ENCODE measurements at regions of chr16 and their contacts with region 1.

Region 1: DNA sequence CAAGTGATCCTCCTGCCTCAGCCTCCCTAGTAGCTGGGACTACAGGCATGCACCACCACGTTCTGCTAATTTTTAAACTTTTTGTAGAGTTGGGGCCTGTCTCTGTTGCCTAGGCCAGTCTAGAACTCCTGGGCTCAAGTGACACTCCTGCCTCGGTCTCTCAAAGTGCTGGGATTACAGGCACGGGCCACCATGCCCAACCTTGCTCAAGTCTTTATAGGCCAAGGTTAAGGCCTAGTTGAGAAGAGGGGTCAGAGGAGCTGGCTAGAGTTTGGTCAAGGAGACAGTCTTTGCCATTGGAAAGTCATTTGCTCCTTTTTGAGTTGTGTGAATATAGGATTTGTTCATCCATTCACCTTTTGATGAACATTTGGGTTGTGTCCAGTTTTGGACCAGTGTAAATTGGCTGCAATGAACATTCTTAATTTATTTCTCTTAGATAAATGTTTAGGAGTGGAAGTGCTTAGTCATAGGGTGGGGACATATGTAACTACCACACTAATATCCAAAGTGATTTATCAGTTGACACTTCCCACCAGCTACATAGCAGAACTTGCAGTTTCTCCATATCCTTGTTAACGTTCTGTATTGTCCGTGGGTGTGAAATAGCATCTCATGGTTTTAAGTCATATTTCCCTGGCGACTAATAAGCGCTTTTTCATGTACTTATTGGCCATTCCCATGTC is 30.7 kb upstream of the ARHGAP17 start:
- DNase-seq: peak; percentile 9
- ATAC-seq: no peak
- H3K4me3 ChIP-seq: no peak overlapping the region
- H3K27ac ChIP-seq: no peak overlapping the region
- H3K4me1 ChIP-seq: peaks cover 24% of the 10 kb centered on the region
- H3K27me3 ChIP-seq: no peaks in the 10 kb centered on the region
- CTCF ChIP-seq: no peak

Region 2: DNA sequence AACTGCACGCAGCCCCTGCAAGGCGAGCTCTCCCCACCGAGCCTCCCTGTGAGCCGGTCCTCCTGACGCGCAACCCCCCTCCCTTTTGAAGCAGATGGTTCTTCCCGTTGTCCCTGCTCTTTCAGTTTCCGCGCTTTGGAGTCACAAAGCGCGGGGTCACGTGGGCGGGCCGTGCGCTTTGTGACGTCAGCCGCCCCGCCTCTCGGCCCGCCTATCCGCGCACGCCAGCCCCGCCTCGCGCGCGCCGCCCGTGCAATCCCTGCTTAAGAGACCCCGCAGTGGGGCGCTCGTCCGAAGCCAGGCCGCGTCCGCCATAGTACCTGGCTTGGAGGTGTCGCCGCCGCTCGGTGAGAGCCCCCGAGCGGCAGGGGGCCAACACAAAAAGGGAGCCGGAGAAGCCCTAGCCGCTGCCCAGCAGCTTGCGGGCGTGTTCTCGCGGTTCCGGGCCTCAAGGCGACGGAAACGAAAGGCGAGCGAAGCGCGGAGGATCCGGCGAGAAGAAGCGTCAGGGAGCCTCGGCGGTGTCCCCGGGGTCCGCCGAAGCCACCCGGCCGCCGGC is 506.5 kb before region 1 on chr16 and contains the start of gene RBBP6:
- CTCF ChIA-PET with region 1: no interaction called
- POLR2A ChIA-PET with region 1: no interaction called
- intact Hi-C with region 1: loop called (anchors 10 kb)
- DNase-seq: peak; percentile 94
- ATAC-seq: peak; percentile 71
- H3K4me3 ChIP-seq: peak within 1 kb of the TSS; percentile 94
- H3K27ac ChIP-seq: peak within 1 kb of the TSS; percentile 88
- H3K4me1 ChIP-seq: peaks cover 37% of the 10 kb centered on the region
- H3K27me3 ChIP-seq: no peaks in the 10 kb centered on the region
- CTCF ChIP-seq: peak; percentile 46
- total RNA-seq, gene RBBP6: 38.4 and 59.0 TPM in 2 replicates

Region 3: DNA sequence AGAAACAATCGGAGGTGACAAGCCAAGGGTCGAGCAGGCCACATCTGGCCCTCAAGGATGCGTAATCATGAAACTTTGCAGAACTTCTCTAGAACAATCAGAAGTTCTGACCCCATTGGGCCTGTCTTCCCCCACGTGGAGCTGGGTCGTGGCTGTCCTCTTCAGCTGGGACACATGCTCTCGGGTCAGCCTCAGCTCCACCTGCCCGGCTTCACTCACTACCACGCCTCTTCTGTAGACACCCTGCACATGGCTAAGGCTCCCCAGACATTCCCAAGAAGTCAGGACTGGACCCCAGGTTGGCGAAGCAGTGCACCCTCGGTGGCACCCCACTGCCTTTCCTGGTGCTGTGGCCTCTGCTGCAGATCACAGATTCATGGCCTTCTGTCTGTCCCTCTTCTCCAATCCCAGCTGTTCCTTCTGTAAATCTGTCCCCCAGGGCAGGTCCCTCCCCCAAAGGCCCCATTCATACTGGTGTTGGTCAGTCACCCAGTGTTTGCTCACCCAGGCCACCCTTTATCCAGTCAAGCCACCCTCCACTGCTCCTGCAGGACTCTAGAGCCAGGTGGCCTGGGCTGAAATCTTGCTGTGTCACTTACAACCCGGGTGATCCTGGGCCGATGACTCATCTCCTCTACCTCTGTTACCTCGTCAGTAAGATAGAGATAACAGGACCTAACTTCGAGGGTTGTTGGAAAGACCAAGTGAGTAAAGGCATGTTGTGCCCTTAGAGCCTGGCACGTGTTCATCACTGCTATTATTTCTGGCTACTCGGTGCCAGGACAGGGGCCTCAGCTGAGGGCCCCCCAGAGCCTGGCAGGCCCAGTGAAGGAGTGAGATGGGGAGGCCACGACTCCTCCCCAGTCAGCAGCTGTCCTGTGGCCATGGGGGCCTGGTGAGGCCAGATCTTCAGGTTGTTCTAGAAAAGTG is 201.5 kb before region 1 on chr16:
- CTCF ChIA-PET with region 1: no interaction called
- POLR2A ChIA-PET with region 1: no interaction called
- intact Hi-C with region 1: loop called (anchors 10 kb)
- DNase-seq: peak; percentile 70
- ATAC-seq: peak; percentile 53
- H3K4me3 ChIP-seq: no peak overlapping the region
- H3K27ac ChIP-seq: peak overlapping the region; percentile 84
- H3K4me1 ChIP-seq: peaks cover 39% of the 10 kb centered on the region
- H3K27me3 ChIP-seq: no peaks in the 10 kb centered on the region
- CTCF ChIP-seq: no peak

Region 4: GRCh38 chr16:24906199-24907020 is 139.4 kb before region 1 on chr16:
- CTCF ChIA-PET with region 1: no interaction called
- POLR2A ChIA-PET with region 1: no interaction called
- intact Hi-C with region 1: loop called (anchors 10 kb)
- DNase-seq: peak; percentile 41
- ATAC-seq: no peak
- H3K4me3 ChIP-seq: no peak overlapping the region
- H3K27ac ChIP-seq: no peak overlapping the region
- H3K4me1 ChIP-seq: no peaks in the 10 kb centered on the region
- H3K27me3 ChIP-seq: no peaks in the 10 kb centered on the region
- CTCF ChIP-seq: no peak; the same call in 1 of the 2 replicates

Region 5: DNA sequence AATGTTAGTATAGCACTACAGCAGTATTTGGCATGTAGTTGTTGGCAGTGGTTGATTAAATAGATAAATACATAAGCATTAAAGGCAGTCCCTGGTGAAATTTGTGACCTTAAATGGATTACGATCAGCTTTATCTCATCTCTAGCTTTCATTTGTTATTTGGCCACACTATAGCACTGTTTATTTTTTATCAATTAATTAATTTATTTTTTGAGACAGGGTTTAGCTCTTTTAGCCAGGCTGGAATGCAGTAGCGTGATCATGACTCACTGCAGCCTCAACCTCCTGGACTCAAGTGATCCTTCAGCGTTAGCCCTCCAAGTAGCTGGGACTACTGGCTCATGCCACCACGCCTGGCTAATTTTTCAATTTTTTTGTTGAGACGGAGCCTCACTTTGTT is 12.0 kb before region 1 on chr16:
- CTCF ChIA-PET with region 1: no interaction called
- POLR2A ChIA-PET with region 1: no interaction called
- intact Hi-C with region 1: loop called (anchors 2 kb)
- DNase-seq: no peak
- ATAC-seq: no peak
- H3K4me3 ChIP-seq: no peak overlapping the region
- H3K27ac ChIP-seq: no peak overlapping the region
- H3K4me1 ChIP-seq: peaks cover 22% of the 10 kb centered on the region
- H3K27me3 ChIP-seq: no peaks in the 10 kb centered on the region
- CTCF ChIP-seq: no peak

Region 6: GRCh38 chr16:25111403-25112166 is 65.7 kb after region 1 on chr16 and contains the start of gene LCMT1:
- CTCF ChIA-PET with region 1: no interaction called
- POLR2A ChIA-PET with region 1: interaction called, 3 read pairs
- intact Hi-C with region 1: loop called (anchors 5 kb)
- DNase-seq: peak; percentile 97
- ATAC-seq: peak; percentile 89
- H3K4me3 ChIP-seq: peak within 1 kb of the TSS; percentile 79
- H3K27ac ChIP-seq: peak within 1 kb of the TSS; percentile 31; the same call in 1 of the 2 replicates
- H3K4me1 ChIP-seq: peaks cover 18% of the 10 kb centered on the region
- H3K27me3 ChIP-seq: no peaks in the 10 kb centered on the region
- CTCF ChIP-seq: no peak
- total RNA-seq, gene LCMT1: 30.5 and 31.0 TPM in 2 replicates

Measured in PC-3 (cell line).